Activated naive CD4-positive, alpha-beta T cell treated with anti-CD3 and anti-CD28 coated beads for 36 hours (primary cell): ENCODE measurements at regions of chr5 and their contacts with region 1.

Region 1: GRCh38 chr5:54310433-54311175 is at the start of gene ARL15:
- DNase-seq: peak; percentile 98
- H3K4me3 Mint-ChIP-seq: peak within 1 kb of the TSS; percentile 89
- H3K27ac Mint-ChIP-seq: peak within 1 kb of the TSS; percentile 84
- H3K4me1 Mint-ChIP-seq: peaks cover 24% of the 10 kb centered on the region
- H3K27me3 Mint-ChIP-seq: no peaks in the 10 kb centered on the region
- total RNA-seq, gene ARL15: 6.7 to 7.0 TPM

Region 2: DNA sequence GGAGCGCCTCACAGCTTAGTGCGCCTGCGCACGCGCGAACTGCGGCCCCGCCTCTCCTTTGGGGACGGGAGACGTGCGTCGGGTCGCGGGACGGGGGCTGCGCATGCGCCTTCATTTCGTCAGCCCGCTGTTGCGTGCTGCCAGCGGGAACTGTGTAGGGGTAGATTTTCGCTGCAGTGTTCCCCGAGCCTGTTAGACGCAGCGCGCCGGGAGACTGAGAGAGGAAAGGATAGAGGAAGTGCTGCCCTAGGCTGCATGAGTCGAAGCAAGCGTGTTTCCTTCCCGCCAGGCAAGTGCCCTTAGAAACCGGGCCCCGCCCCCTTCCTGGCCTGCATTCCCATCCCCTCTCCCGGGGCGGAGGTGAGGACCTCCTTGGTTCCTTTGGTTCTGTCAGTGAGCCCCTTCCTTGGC is 1510.6 kb before region 1 on chr5:
- CTCF ChIA-PET with region 1: no interaction called
- intact Hi-C with region 1: loop called (anchors 5 kb)
- DNase-seq: peak; percentile 95
- H3K4me3 Mint-ChIP-seq: peak overlapping the region; percentile 93
- H3K27ac Mint-ChIP-seq: peak overlapping the region; percentile 93
- H3K4me1 Mint-ChIP-seq: peaks cover 46% of the 10 kb centered on the region
- H3K27me3 Mint-ChIP-seq: no peaks in the 10 kb centered on the region

Region 3: DNA sequence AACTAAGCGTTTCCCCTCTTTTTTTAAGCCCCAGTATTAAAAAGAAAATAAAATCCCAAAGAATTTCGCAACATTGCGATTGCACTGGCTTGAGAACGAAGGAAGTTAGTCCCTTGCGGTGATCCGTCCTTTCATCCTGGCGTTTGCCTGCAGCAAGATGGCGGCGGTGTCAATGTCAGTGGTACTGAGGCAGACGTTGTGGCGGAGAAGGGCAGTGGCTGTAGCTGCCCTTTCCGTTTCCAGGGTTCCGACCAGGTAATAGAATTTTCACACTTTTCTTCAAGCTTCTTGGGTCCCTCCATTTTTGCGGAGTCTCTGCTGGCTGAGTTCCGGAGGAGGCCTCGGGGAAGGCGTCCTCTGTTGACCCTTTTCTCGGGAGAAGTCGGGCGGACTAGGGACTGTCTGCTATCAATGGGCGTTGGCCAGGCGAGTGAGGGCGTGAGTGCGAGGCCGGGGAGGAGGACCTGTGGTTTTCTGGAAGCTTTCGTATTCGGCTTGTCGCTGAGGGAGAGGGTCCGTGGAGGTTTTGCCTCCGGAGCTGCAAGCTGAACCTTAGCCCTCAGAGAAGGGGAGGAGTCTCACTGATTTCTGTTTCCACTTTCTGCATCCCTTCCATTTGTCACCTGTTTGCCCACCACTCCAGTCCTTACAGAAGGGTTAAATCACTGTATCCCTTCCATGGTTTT is 750.0 kb before region 1 on chr5 and contains the start of gene NDUFS4:
- CTCF ChIA-PET with region 1: no interaction called
- intact Hi-C with region 1: loop called (anchors 2 kb)
- DNase-seq: peak; percentile 94
- H3K4me3 Mint-ChIP-seq: peak within 1 kb of the TSS; percentile 97
- H3K27ac Mint-ChIP-seq: peak within 1 kb of the TSS; percentile 92
- H3K4me1 Mint-ChIP-seq: peaks cover 26% of the 10 kb centered on the region
- H3K27me3 Mint-ChIP-seq: peaks cover 18% of the 10 kb centered on the region
- total RNA-seq, gene NDUFS4: 81.4 to 84.1 TPM

Region 4: GRCh38 chr5:54217826-54218503 is 92.6 kb before region 1 on chr5:
- CTCF ChIA-PET with region 1: no interaction called
- intact Hi-C with region 1: no loop called
- DNase-seq: peak; percentile 27
- H3K4me3 Mint-ChIP-seq: no peak overlapping the region
- H3K27ac Mint-ChIP-seq: no peak overlapping the region
- H3K4me1 Mint-ChIP-seq: peaks cover 8% of the 10 kb centered on the region
- H3K27me3 Mint-ChIP-seq: no peaks in the 10 kb centered on the region

Region 5: DNA sequence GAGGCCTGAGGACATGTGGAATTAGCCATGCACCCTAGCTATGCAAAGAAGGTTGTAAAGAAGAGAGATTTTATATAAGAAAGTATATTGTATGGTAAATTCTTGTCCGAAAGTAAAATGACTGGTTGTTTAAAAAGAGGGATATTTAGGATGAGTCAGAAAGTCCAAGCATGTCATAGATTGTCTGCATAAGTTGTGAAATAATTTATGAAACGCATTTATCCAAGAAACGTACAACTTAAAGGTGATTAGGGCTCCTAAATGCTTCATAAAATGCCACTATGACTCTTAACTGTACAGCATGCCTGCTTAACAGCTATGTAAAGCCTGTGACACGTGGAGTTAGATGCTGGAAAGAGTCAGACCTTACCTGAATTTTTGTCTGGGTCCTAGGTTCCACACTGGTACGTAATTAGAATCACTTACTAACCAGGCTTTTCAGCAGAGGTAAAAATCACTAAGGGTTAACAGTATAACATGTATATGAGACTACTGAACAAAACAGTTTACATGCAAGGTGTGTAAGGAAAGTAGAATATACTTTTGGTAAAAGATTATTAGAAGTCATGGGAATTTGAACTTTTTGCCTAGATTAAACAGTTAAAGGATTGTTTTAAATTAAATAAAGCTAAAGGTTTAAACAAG is 36.7 kb after region 1 on chr5:
- CTCF ChIA-PET with region 1: no interaction called
- intact Hi-C with region 1: no loop called
- DNase-seq: no peak
- H3K4me3 Mint-ChIP-seq: no peak overlapping the region
- H3K27ac Mint-ChIP-seq: no peak overlapping the region
- H3K4me1 Mint-ChIP-seq: no peaks in the 10 kb centered on the region
- H3K27me3 Mint-ChIP-seq: no peaks in the 10 kb centered on the region

Region 6: GRCh38 chr5:54390015-54390414 is 79.4 kb after region 1 on chr5:
- CTCF ChIA-PET with region 1: no interaction called
- intact Hi-C with region 1: loop called (anchors 5 kb)
- DNase-seq: no peak
- H3K4me3 Mint-ChIP-seq: no peak overlapping the region
- H3K27ac Mint-ChIP-seq: no peak overlapping the region
- H3K4me1 Mint-ChIP-seq: peaks cover 10% of the 10 kb centered on the region
- H3K27me3 Mint-ChIP-seq: no peaks in the 10 kb centered on the region

Region 7: DNA sequence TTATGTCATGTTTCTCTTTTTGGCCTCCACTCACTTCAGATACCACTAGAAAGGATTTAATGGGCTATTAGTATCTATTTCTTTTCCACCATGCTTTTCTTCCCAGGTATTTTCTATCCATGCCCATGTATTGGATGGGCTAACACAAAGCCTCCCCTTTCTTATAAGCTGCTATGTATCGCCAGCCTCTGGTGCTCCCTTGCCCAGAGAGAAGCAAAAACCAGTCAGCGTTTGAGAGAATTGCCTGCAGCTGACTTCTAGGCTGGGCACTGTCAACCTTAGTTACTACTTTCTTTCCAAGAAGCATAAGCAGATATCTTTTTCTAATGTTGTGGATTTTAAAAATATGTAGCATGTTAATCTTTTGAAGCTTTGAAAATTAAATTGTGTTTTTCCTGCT is 114.7 kb after region 1 on chr5:
- CTCF ChIA-PET with region 1: no interaction called
- intact Hi-C with region 1: no loop called
- DNase-seq: no peak
- H3K4me3 Mint-ChIP-seq: no peak overlapping the region
- H3K27ac Mint-ChIP-seq: no peak overlapping the region
- H3K4me1 Mint-ChIP-seq: no peaks in the 10 kb centered on the region
- H3K27me3 Mint-ChIP-seq: peaks cover 7% of the 10 kb centered on the region

Region 8: DNA sequence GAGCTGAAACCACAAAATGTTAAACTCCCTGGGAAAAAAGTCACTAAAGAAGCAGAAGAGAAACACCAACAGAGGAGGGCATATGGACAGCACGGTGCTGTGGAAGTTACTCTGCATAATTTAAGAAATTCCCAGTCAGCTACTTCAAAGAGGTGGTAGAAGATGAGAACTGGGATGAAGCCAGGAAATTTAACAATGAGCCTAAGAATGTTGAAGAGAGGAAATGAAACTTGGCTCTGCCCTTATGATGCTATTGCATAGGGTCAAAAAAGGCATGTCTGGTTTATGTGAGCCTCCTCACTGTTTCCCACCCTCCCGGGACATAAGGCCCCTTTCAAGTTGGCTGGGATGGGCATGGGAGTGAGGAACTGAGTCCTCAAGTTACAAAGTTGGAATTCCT is 181.6 kb after region 1 on chr5:
- CTCF ChIA-PET with region 1: interaction called, 12 read pairs
- intact Hi-C with region 1: loop called (anchors 1 kb)
- DNase-seq: no peak
- H3K4me3 Mint-ChIP-seq: no peak overlapping the region
- H3K27ac Mint-ChIP-seq: no peak overlapping the region
- H3K4me1 Mint-ChIP-seq: no peaks in the 10 kb centered on the region
- H3K27me3 Mint-ChIP-seq: no peaks in the 10 kb centered on the region

Region 9: DNA sequence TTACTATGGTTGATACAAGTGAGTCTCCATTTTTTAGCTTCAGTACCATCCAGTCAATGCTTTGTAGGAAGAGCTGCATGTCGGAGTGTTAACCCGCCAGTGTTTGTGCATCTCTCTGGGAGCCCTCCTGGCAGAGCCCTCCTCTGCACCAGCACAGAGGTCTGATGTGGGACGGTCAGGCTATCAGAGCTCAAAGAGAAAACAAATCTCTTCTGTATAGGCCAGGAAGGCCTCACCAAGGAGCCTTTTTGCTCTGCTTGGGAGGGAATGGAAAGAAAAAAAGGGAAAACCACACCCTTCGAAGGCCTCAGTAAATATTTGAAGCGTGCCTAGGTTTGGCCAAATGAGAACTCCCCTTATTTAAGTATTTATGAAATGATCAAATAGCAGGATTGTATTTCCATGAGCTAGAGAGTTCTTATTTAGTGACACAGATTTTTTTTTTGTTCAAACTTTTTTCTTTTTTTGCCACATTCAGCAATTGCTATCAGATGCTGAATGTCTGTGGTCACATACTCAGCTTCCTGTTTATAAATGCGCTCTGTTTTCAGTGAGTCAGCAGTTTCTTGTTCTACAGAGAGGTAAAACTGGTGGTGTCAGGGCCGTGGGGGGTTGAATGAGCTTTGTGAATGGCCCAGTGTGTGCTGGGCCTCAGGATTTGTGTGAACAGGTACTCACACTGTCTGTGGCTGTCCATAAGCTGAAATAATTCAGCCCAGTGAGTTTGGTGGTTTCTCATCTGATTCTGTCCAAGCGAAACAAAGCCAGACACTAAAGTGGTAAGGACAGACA is 433.6 kb after region 1 on chr5:
- CTCF ChIA-PET with region 1: no interaction called
- intact Hi-C with region 1: loop called (anchors 10 kb)
- DNase-seq: peak; percentile 66
- H3K4me3 Mint-ChIP-seq: no peak overlapping the region
- H3K27ac Mint-ChIP-seq: peak overlapping the region; percentile 54
- H3K4me1 Mint-ChIP-seq: peaks cover 11% of the 10 kb centered on the region
- H3K27me3 Mint-ChIP-seq: no peaks in the 10 kb centered on the region

Region 10: GRCh38 chr5:54832858-54833257 is 522.3 kb after region 1 on chr5:
- CTCF ChIA-PET with region 1: no interaction called
- intact Hi-C with region 1: no loop called
- DNase-seq: no peak
- H3K4me3 Mint-ChIP-seq: no peak overlapping the region
- H3K27ac Mint-ChIP-seq: no peak overlapping the region
- H3K4me1 Mint-ChIP-seq: peaks cover 7% of the 10 kb centered on the region
- H3K27me3 Mint-ChIP-seq: no peaks in the 10 kb centered on the region

Region 11: GRCh38 chr5:55534436-55535198 is 1224.0 kb after region 1 on chr5 and contains the start of gene PLPP1:
- CTCF ChIA-PET with region 1: no interaction called
- intact Hi-C with region 1: loop called (anchors 5 kb)
- DNase-seq: peak; percentile 83
- H3K4me3 Mint-ChIP-seq: peak within 1 kb of the TSS; percentile 82
- H3K27ac Mint-ChIP-seq: peak within 1 kb of the TSS; percentile 86
- H3K4me1 Mint-ChIP-seq: peaks cover 29% of the 10 kb centered on the region
- H3K27me3 Mint-ChIP-seq: no peaks in the 10 kb centered on the region
- total RNA-seq, gene PLPP1: 7.3 to 8.3 TPM